ENCODE measurements at regions of chr3 and their contacts with region 1.

Region 1: DNA sequence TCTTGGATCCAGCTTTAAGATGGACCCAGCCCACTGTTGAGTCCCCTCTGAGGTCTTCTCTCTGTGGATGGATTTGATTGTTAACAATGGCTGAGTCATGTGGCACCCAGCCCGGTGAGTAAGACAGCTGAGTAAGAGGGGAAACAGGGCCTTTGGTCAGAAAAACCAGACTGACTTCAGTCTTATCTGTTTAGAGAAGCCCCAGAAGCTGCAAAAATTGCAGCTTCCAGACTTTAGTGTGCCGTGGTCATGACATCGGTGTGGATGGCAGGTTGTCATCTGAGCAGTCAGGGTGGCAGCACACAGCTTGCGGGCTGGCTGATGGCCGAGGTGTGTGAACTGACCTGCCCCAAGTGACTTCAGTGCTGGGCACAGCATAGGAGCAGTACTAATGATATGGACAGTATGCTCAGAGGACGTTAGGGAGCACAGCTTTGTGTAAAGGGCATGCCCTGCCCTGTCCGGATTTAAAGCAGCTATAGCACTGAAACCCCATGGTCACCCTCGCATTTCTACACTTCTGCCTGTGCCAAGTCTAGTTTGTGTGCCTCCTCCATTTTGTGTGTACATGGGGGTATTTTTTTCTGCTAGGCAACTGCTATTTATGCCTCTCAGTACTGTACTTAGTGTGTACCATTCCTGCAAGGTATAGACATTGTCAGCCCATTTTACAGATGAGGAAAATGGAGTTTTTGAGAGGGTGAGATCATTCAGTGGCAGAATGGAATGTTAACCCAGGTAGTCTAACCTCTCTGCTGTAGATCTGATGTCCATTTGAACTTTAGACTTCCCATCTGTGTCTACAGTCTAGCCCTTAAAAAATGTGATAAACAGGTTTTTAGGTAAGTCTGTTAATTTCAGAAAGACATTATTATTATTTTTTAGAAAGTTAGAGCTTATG is 44.4 kb downstream of the FLNB start:
- DNase-seq: peak; percentile 61
- H3K4me3 Mint-ChIP-seq: no peak overlapping the region
- H3K27ac Mint-ChIP-seq: no peak overlapping the region
- H3K4me1 Mint-ChIP-seq: peaks cover 10% of the 10 kb centered on the region
- H3K27me3 Mint-ChIP-seq: no peaks in the 10 kb centered on the region

Region 2: GRCh38 chr3:58034738-58035523 is 17.7 kb before region 1 on chr3:
- intact Hi-C with region 1: loop called (anchors 1 kb)
- DNase-seq: peak; percentile 90
- H3K4me3 Mint-ChIP-seq: peak overlapping the region; percentile 70
- H3K27ac Mint-ChIP-seq: peak overlapping the region; percentile 82
- H3K4me1 Mint-ChIP-seq: peaks cover 50% of the 10 kb centered on the region
- H3K27me3 Mint-ChIP-seq: no peaks in the 10 kb centered on the region